ENCODE measurements at regions of chr12 and their contacts with region 1.

Region 1: DNA sequence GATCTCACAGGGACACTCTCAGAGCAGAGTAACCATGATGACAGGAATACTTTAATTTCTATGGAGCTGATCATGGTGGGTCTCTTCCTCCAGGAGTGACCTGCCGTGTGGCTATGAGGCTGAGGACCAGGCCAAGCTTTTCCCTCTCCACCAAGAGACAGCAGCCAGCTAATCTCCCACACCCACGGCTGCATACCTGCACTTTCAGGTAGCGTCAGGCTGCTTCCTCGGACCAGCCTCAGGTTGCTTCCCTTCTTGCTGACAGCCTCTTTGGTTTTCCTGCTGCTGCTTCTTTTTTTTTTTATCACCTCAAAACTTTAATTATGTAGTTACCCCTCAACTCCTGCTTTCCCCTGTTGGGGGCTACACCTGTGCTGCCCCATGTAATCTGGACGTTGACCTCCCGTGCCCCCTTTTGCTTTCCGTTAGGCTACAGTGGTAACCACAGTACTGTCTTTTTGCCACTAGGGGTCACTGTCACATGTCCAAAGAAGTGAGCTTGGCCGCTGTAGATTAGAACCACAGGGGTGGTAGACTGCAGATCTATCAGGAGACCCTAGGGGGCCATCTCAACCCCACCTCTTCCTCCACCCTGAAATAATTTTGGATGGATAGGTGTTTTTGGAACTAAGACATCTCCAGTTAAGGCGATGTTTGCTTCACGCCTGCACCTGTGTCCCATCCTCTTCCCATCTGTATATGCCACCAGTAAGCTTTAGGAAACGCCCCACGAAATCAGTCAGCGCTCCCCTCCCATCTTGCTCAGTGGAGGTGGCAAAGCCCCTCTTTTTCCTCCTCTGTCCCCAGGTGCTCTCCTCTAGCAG is 7.8 kb upstream of the PIP4K2C start:
- DNase-seq: peak; percentile 88 to 93 (median 91)
- H3K4me3 ChIP-seq: no peak overlapping the region
- H3K27ac ChIP-seq: no peak overlapping the region
- H3K4me1 ChIP-seq: no peaks in the 10 kb centered on the region
- H3K27me3 ChIP-seq: peaks cover 0 to 25% (median 5%) of the 10 kb centered on the region in 5 experiments

Region 2: DNA sequence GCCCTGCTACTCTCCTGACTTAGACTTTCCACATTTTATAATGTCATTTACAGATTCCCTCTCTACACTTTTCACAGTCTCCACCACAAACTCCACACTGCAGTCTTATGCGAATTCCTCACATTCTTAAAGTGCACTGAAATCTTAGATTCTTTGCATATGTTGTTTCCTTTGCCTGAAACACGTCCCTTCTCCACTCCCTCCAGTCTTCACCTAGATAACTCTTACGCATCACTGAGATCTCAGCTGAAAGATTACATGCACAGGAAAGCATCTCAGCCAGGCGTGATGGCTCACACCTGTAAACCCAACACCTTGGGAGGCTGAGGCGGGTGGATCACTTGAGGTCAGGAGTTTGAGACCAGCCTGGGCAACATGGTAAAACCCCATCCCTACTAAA is 99.7 kb before region 1 on chr12:
- CTCF ChIA-PET with region 1: no interaction called
- POLR2A ChIA-PET with region 1: no interaction called
- DNase-seq: no peak
- H3K4me3 ChIP-seq: no peak overlapping the region
- H3K27ac ChIP-seq: no peak overlapping the region
- H3K4me1 ChIP-seq: peaks cover 20 to 43% (median 39%) of the 10 kb centered on the region in 4 experiments
- H3K27me3 ChIP-seq: no peaks in the 10 kb centered on the region

Region 3: GRCh38 chr12:57552835-57553313 is 30.3 kb before region 1 on chr12:
- CTCF ChIA-PET with region 1: interaction called, 12 read pairs
- POLR2A ChIA-PET with region 1: no interaction called
- DNase-seq: peak in 1 of 3 donors; percentile 5
- H3K4me3 ChIP-seq: no peak overlapping the region
- H3K27ac ChIP-seq: peak overlapping the region in 1 of 2 experiments; percentile 45
- H3K4me1 ChIP-seq: peaks cover 0 to 13% (median 4%) of the 10 kb centered on the region in 4 experiments
- H3K27me3 ChIP-seq: peaks cover 0 to 32% (median 6%) of the 10 kb centered on the region in 5 experiments

Region 4: GRCh38 chr12:57604454-57604991 is 21.3 kb after region 1 on chr12 and contains the start of gene DTX3:
- CTCF ChIA-PET with region 1: interaction called, 34 read pairs
- POLR2A ChIA-PET with region 1: interaction called, 6 read pairs
- DNase-seq: peak; percentile 47 to 71 (median 55)
- H3K4me3 ChIP-seq: peak within 1 kb of the TSS; percentile 55 to 87 (median 72)
- H3K27ac ChIP-seq: peak within 1 kb of the TSS; percentile 48 to 67
- H3K4me1 ChIP-seq: peaks cover 0 to 21% (median 6%) of the 10 kb centered on the region in 4 experiments
- H3K27me3 ChIP-seq: peaks cover 0 to 11% (median 0%) of the 10 kb centered on the region in 5 experiments

Region 5: GRCh38 chr12:57621497-57622292 is 38.5 kb after region 1 on chr12:
- CTCF ChIA-PET with region 1: interaction called, 121 read pairs
- POLR2A ChIA-PET with region 1: no interaction called
- DNase-seq: peak; percentile 40 to 62 (median 56)
- H3K4me3 ChIP-seq: peak overlapping the region in 5 of 7 experiments; percentile 35 to 68 (median 61)
- H3K27ac ChIP-seq: no peak overlapping the region
- H3K4me1 ChIP-seq: peaks cover 0 to 26% (median 19%) of the 10 kb centered on the region in 4 experiments
- H3K27me3 ChIP-seq: peaks cover 5 to 99% (median 51%) of the 10 kb centered on the region in 5 experiments

Region 6: GRCh38 chr12:57744777-57745484 is 161.7 kb after region 1 on chr12 and contains the start of gene TSPAN31:
- CTCF ChIA-PET with region 1: interaction called, 10 read pairs
- POLR2A ChIA-PET with region 1: no interaction called
- DNase-seq: peak; percentile 99
- H3K4me3 ChIP-seq: peak within 1 kb of the TSS; percentile 79 to 99 (median 86)
- H3K27ac ChIP-seq: peak within 1 kb of the TSS; percentile 95 to 98
- H3K4me1 ChIP-seq: peaks cover 18 to 48% (median 42%) of the 10 kb centered on the region in 4 experiments
- H3K27me3 ChIP-seq: no peaks in the 10 kb centered on the region

Measured in common myeloid progenitor, CD34-positive (primary cell).